ENCODE measurements at regions of chr11 and their contacts with region 1.

Region 1: DNA sequence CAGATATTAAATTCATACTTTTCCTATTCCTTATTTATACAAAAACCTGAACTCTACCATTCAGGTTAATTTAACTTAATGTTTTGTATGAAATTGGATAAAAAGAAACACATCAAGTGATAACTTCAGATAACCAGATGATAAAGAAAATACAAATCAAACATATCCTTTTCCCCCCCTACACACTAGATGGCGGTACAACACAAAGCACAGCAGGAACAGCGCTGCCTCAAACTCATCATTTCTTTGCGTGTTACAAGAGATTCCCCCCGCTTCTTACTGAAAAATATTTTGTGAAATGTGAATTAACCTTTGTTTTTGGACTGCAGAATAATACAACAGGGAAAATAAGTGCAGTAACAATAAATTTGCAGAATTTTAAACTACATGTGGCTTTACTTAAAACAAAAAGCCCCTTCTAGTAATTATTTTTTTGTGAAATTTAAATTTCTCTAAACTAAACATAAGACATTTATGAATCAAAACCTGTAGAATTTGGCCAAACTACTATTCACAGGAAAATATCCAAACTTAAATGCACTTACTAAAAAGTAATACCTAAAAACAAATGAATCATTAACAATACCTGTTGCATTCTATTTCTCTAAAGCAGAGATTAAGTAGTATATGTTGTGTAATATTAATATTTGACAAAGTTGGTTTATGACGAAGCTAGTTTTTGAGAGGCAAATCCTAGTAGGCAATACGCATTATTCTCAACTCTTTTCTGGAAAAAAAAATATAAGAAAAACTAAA is 74.4 kb downstream of the ARHGAP32 start:
- DNase-seq: peak; percentile 45
- H3K4me3 ChIP-seq: no peak overlapping the region
- H3K27ac ChIP-seq: no peak overlapping the region
- H3K4me1 ChIP-seq: no peaks in the 10 kb centered on the region
- H3K27me3 ChIP-seq: no peaks in the 10 kb centered on the region
- CTCF ChIP-seq: peak; percentile 62 to 76 (median 73)
- POLR2A ChIP-seq: no peak

Region 2: DNA sequence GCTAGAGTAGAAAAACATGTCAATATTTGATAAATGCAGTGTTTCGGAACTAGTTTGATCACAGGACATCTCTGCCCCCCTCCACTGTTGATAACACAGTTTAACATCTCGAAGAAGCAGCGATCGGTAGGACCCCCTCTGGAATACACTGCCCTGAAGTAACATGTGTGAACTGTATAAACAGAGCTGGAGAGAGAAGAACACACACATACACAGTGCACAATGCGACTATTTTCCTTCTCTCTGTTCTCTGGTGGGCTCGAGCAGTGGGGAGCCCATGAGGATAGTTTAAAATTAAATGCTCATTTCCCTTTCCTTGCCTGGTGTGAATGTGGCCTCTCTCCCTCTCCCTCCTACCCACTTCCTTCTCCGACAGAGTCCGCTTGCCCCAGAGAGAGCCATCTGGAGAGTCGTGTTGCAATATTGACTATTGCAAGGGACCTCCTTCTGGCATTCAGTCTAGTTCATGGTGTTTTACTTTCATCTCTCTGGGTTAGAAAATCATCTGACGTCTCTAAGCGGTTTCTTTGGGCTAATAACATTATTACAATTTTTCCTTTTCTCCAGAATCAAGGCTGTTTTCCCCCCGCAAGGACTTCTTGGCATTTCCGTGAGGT is 206.2 kb after region 1 on chr11:
- intact Hi-C with region 1: loop called (anchors 10 kb)
- DNase-seq: peak; percentile 22
- H3K4me3 ChIP-seq: no peak overlapping the region
- H3K27ac ChIP-seq: no peak overlapping the region
- H3K4me1 ChIP-seq: no peaks in the 10 kb centered on the region
- H3K27me3 ChIP-seq: no peaks in the 10 kb centered on the region
- CTCF ChIP-seq: no peak
- POLR2A ChIP-seq: no peak

Measured in testis (tissue), 5 donors.